ENCODE measurements at regions of chr6 and their contacts with region 1.

Region 1: GRCh38 chr6:75208298-75209183 is 2.7 kb upstream of the COL12A1 start:
- DNase-seq: peak; percentile 66
- H3K4me3 ChIP-seq: peak overlapping the region; percentile 1
- CTCF ChIP-seq: peak; percentile 87

Region 2: DNA sequence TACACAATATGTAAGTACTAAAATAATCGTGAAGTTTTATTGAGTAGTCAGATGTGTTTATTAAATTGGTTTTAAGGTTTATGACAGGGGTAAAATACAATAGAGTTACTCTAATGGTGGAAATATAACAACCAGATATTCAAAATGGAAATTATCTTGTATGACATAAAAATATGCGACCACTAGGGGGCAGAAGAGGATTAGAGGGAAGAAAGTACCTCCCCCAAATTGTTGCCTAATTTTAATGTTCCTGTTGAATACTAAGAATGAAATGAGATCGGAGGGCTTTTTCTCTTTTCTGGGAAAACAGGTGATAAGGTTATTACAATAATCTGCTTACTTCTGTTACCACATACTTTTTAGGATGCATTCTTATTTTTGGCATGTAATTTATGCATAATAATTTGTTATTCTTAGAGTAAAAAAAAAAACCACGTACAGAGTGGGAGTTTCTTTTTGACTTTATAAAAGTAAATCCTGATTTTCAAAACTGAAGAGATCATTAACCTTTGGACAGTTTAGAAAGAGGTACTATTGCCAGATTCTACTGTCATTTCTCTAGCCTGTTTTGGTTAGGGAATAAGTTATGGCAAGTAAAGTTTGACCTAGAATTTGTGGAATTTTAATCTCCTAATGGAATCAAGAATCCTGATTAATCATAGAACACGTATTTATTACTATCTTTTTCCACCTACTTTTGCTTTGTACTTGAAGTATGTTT is 1353.4 kb before region 1 on chr6:
- in situ Hi-C with region 1: loop called (anchors 5 kb)
- DNase-seq: peak; percentile 63
- H3K4me3 ChIP-seq: no peak overlapping the region
- CTCF ChIP-seq: peak; percentile 59

Region 3: DNA sequence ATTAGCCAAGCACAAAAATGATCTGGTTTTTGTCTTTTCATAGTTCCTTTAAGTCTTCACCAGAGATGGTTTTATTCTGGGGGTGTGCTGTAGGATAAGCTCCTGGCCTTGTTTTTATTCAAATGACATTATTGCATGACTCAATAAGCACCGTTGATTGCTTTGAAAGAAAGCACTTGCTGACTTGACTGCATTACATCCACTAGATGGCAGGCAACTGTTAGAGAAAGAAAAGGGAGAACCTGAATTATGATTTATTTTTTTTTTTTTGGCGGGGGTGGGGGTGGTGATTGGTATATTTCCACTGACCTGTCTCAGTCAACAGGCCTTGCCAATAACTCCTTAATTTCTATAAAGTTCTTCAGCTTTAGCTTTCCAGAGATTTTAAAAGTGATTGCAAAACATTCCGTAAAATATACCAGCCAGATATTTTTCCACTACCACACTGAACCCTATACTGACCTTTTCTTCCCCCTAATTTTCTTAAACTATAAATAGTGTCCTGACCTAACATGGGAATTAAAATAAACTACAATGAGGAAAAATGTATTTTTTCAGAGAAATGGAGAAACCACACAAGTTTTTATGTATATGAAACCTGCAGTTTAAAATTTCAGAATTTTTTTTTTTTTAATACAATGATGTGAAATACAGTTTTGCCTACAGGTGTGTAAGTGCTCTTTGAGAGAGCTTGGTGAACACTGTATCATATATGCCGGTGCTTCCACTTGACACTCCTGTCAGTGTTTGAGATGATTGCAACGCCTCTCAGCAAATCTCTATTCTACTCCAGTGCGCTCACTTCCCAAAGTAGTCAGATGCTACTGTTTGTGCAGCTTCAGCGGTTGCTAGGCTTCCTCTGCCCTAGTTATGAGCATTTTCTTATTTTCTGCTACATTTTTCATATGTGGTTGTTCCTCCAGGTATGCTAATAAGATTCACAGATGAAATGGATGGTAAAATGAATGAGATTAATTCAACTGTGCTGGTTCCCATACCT is 1238.3 kb before region 1 on chr6:
- in situ Hi-C with region 1: loop called (anchors 25 kb)
- DNase-seq: peak; percentile 36
- H3K4me3 ChIP-seq: no peak overlapping the region
- CTCF ChIP-seq: peak; percentile 73

Region 4: GRCh38 chr6:74091136-74091793 is 1117.3 kb before region 1 on chr6:
- in situ Hi-C with region 1: loop called (anchors 25 kb)
- DNase-seq: peak; percentile 24
- H3K4me3 ChIP-seq: no peak overlapping the region
- CTCF ChIP-seq: peak; percentile 55

Region 5: GRCh38 chr6:74409447-74409846 is 799.1 kb before region 1 on chr6:
- in situ Hi-C with region 1: loop called (anchors 25 kb)
- DNase-seq: peak; percentile 67
- H3K4me3 ChIP-seq: no peak overlapping the region
- CTCF ChIP-seq: peak; percentile 47

Measured in astrocyte of the cerebellum (primary cell).